ENCODE measurements at regions of chr5 and their contacts with region 1.

Region 1: DNA sequence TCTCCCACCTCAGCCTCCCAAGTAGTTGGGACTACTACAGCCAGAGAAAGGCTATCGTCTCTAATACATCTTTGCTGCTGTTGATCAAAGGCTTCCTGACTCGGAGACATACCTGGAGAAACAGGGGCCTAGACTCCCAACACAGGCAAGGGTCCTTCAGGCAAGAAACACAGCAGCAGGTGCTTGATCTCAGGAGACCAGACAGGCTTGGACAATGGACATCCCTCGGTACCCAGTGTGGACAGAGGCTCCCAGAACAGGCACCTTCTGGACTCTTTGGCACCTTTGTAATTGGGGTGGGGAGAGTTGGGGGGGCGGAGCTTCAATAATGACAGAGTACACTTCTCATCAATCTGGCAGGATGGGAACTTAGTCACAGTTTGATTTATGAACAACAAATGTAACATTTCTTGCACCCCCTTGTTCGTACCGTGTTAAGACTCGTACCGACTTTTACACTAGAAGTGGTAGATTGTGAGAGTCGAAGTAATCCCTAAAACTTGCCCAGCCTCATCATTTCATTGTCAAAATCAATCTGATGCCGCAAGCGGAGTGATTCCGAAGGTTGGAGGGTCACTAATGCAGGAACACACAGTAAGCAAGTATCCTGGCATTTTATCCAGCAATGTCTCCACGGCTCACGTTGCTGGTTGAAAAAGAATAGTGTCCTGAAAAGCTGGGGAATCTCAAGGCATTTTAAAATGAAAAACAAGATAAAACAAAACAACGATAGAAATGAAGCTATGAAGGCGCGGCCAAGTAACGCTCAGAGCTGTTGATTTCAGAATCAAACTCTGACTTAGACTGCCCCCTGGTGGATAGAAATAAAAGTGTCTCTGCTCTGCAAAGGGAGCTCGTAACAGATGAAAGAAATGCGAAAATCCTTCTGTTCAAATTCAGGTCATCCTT is 46.4 kb upstream of the STK32A start:
- DNase-seq: peak; percentile 66
- ATAC-seq: peak; percentile 88
- H3K4me3 ChIP-seq: no peak overlapping the region
- H3K27ac ChIP-seq: no peak overlapping the region
- H3K4me1 ChIP-seq: no peaks in the 10 kb centered on the region
- H3K27me3 ChIP-seq: no peaks in the 10 kb centered on the region
- CTCF ChIP-seq: peak; percentile 83
- EP300 ChIP-seq: no peak
- POLR2A ChIP-seq: no peak
- RAD21 ChIP-seq: peak; percentile 88

Region 2: DNA sequence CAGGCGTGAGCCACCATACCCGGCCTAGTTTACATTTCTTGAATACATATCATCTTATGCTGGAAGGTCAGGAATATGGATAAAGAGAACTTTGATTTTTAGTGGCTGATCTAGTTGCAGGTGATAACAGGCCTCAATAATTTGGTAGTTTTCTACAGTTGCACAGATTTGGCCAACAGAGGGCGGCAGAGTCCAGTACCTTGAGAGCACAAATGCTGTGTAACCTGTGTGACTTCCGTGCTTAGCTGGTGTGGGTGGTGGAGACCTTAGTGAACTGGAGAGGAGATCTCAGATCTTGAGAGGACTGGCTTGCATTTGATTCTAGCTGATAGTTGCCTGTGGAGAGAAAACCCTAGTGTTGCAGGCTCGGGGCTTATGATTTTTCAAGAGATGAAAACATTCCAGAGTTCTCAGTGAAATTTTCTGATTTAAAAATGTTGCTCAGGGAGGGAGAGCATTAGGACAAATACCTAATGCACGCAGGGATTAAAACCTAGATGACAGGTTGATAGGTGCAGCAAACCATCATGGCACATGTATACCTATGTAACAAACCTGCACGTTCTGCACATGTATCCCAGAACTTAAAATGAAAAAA is 655.1 kb before region 1 on chr5:
- CTCF ChIA-PET with region 1: no interaction called
- POLR2A ChIA-PET with region 1: no interaction called
- in situ Hi-C with region 1: no loop called
- intact Hi-C with region 1: loop called (anchors 5 kb)
- DNase-seq: peak; percentile 66
- ATAC-seq: peak; percentile 97
- H3K4me3 ChIP-seq: no peak overlapping the region
- H3K27ac ChIP-seq: no peak overlapping the region
- H3K4me1 ChIP-seq: no peaks in the 10 kb centered on the region
- H3K27me3 ChIP-seq: no peaks in the 10 kb centered on the region
- CTCF ChIP-seq: peak; percentile 89
- EP300 ChIP-seq: no peak
- POLR2A ChIP-seq: no peak
- RAD21 ChIP-seq: no peak

Region 3: GRCh38 chr5:146662229-146662628 is 526.2 kb before region 1 on chr5:
- CTCF ChIA-PET with region 1: no interaction called
- POLR2A ChIA-PET with region 1: no interaction called
- in situ Hi-C with region 1: loop called (anchors 25 kb)
- intact Hi-C with region 1: loop called (anchors 2 kb)
- DNase-seq: peak; percentile 19
- ATAC-seq: no peak
- H3K4me3 ChIP-seq: no peak overlapping the region
- H3K27ac ChIP-seq: no peak overlapping the region
- H3K4me1 ChIP-seq: no peaks in the 10 kb centered on the region
- H3K27me3 ChIP-seq: no peaks in the 10 kb centered on the region
- CTCF ChIP-seq: peak; percentile 62
- EP300 ChIP-seq: no peak
- POLR2A ChIP-seq: no peak
- RAD21 ChIP-seq: no peak

Region 4: GRCh38 chr5:147098233-147098790 is 90.1 kb before region 1 on chr5:
- CTCF ChIA-PET with region 1: interaction called, 63 read pairs
- POLR2A ChIA-PET with region 1: interaction called, 7 read pairs
- in situ Hi-C with region 1: loop called (anchors 5 kb)
- intact Hi-C with region 1: loop called (anchors 1 kb)
- DNase-seq: peak; percentile 33
- ATAC-seq: peak; percentile 61
- H3K4me3 ChIP-seq: no peak overlapping the region
- H3K27ac ChIP-seq: no peak overlapping the region
- H3K4me1 ChIP-seq: 0 out of 2 replicates have a peak, but pooled peaks cover 6% of the 10 kb centered on the region
- H3K27me3 ChIP-seq: no peaks in the 10 kb centered on the region
- CTCF ChIP-seq: peak; percentile 62
- EP300 ChIP-seq: no peak
- POLR2A ChIP-seq: no peak
- RAD21 ChIP-seq: peak; percentile 62

Region 5: GRCh38 chr5:147223948-147224791 is 35.7 kb after region 1 on chr5:
- CTCF ChIA-PET with region 1: no interaction called
- POLR2A ChIA-PET with region 1: no interaction called
- in situ Hi-C with region 1: no loop called
- intact Hi-C with region 1: loop called (anchors 1 kb)
- DNase-seq: peak; percentile 8
- ATAC-seq: peak; percentile 69
- H3K4me3 ChIP-seq: no peak overlapping the region
- H3K27ac ChIP-seq: no peak overlapping the region
- H3K4me1 ChIP-seq: no peaks in the 10 kb centered on the region
- H3K27me3 ChIP-seq: no peaks in the 10 kb centered on the region
- CTCF ChIP-seq: peak; percentile 43
- EP300 ChIP-seq: no peak
- POLR2A ChIP-seq: no peak
- RAD21 ChIP-seq: no peak